ENCODE measurements at regions of chr3 and their contacts with region 1.

Region 1: GRCh38 chr3:190585805-190586630 is 72.1 kb downstream of the IL1RAP start:
- DNase-seq: peak; percentile 49
- H3K4me3 Mint-ChIP-seq: peak overlapping the region; percentile 72
- H3K27ac Mint-ChIP-seq: peak overlapping the region; percentile 97
- H3K4me1 Mint-ChIP-seq: peaks cover 46% of the 10 kb centered on the region
- H3K27me3 Mint-ChIP-seq: no peaks in the 10 kb centered on the region

Region 2: GRCh38 chr3:190575437-190576185 is 10.4 kb before region 1 on chr3:
- intact Hi-C with region 1: loop called (anchors 1 kb)
- DNase-seq: no peak
- H3K4me3 Mint-ChIP-seq: no peak overlapping the region
- H3K27ac Mint-ChIP-seq: peak overlapping the region; percentile 59
- H3K4me1 Mint-ChIP-seq: peaks cover 55% of the 10 kb centered on the region
- H3K27me3 Mint-ChIP-seq: no peaks in the 10 kb centered on the region

Region 3: GRCh38 chr3:190601622-190602021 is 15.6 kb after region 1 on chr3:
- intact Hi-C with region 1: loop called (anchors 1 kb)
- DNase-seq: no peak
- H3K4me3 Mint-ChIP-seq: no peak overlapping the region
- H3K27ac Mint-ChIP-seq: no peak overlapping the region
- H3K4me1 Mint-ChIP-seq: peaks cover 40% of the 10 kb centered on the region
- H3K27me3 Mint-ChIP-seq: no peaks in the 10 kb centered on the region

Measured in activated T-helper 1 cell treated with anti-CD3 and anti-CD28 coated beads, Interleukin-12 subunit alpha, Interleukin-12 subunit beta, Interleukin-2, Interleukin-4 antibody, amounts not matched to agents 30 ng/mL and 10 ng/mL and 1 ng/mL, durations not matched to agents 14 hours and 24 hours and 36 hours (primary cell).